MCF 10A (cell line): ENCODE measurements at regions of chr1 and their contacts with region 1.

Region 1: DNA sequence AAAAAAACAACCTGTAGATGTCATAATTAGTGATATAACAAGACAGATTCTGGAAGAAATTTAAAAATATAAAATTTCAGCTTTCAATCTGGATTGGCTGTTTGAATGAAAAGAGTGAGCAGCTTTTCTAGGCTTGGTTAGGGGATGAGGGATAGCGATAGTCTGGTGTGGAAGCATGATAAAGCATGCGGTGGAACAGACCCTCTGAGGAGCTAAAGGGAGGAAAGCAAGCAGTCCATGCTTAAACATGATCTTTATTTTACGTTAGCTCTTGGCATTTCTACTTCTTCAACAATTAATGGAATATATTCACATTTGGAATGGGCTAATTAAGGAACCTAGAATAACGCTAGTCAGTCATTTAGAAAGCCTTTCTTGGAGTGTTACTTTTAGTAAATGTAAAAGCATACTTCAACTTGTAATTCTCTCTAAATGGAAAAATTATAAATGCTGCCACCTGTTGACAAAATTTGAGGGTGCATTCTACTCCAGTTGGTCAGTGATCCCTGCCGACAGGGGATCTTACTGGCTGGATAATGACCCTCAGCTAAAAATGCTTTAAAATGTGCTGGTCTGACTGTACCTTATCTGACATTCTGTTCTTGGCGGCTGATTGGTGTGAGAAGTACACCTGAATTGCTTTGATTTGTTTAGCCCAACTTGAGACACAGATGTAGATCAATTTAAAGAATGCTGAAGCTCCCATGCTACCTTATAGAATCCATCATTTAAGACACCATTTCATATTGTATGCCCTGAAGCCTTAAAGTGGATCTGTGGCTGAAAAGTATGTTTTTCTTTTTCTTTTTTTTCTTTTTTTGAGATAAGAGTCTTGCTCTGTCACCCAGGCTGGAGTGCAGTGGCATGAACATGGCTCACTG is 61.2 kb downstream of the AK4 start:
- DNase-seq: peak; percentile 61
- H3K4me3 Mint-ChIP-seq: no peak overlapping the region
- H3K27ac Mint-ChIP-seq: no peak overlapping the region
- H3K4me1 Mint-ChIP-seq: no peaks in the 10 kb centered on the region
- H3K27me3 Mint-ChIP-seq: no peaks in the 10 kb centered on the region
- CTCF ChIP-seq: peak; percentile 56

Region 2: GRCh38 chr1:64864018-64864940 is 345.0 kb before region 1 on chr1:
- CTCF ChIA-PET with region 1: no interaction called
- POLR2A ChIA-PET with region 1: no interaction called
- intact Hi-C with region 1: loop called (anchors 10 kb)
- DNase-seq: peak; percentile 55
- H3K4me3 Mint-ChIP-seq: no peak overlapping the region
- H3K27ac Mint-ChIP-seq: no peak overlapping the region
- H3K4me1 Mint-ChIP-seq: no peaks in the 10 kb centered on the region
- H3K27me3 Mint-ChIP-seq: no peaks in the 10 kb centered on the region
- CTCF ChIP-seq: no peak

Region 3: DNA sequence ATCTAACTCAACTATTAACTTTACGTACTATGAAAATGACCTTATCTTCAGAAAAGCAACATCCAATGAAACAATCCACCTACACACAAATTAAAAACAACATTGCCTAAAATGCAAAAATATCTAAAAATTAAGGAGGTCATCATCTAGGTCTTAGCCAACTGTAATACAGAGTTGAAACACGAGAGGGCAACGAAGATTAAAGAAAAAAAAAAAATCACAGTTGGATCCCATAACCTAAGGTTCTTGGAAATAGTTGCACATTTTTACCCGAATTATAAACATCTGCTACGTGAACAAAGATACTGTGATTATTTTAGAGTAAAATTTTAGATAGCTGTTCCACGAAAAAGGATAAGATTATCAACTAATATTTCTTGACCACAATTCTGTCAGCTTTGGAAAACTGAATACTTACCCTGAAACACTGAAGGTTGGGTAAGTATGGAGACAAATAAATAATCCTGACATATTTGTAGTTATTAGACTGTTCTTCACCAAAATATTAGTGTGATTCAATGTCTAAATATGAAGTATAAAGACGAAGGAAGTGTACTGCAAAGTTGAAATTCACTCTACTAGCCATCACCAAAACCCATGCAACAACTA is 149.2 kb before region 1 on chr1:
- CTCF ChIA-PET with region 1: interaction called, 101 read pairs
- POLR2A ChIA-PET with region 1: interaction called, 11 read pairs
- intact Hi-C with region 1: loop called (anchors 1 kb)
- DNase-seq: peak; percentile 54
- H3K4me3 Mint-ChIP-seq: no peak overlapping the region
- H3K27ac Mint-ChIP-seq: no peak overlapping the region
- H3K4me1 Mint-ChIP-seq: peaks cover 27% of the 10 kb centered on the region
- H3K27me3 Mint-ChIP-seq: no peaks in the 10 kb centered on the region
- CTCF ChIP-seq: peak; percentile 63

Region 4: GRCh38 chr1:65075123-65075976 is 133.9 kb before region 1 on chr1:
- CTCF ChIA-PET with region 1: interaction called, 51 read pairs
- POLR2A ChIA-PET with region 1: no interaction called
- intact Hi-C with region 1: loop called (anchors 1 kb)
- DNase-seq: peak; percentile 71
- H3K4me3 Mint-ChIP-seq: no peak overlapping the region
- H3K27ac Mint-ChIP-seq: no peak overlapping the region
- H3K4me1 Mint-ChIP-seq: peaks cover 5% of the 10 kb centered on the region
- H3K27me3 Mint-ChIP-seq: no peaks in the 10 kb centered on the region
- CTCF ChIP-seq: peak; percentile 48

Region 5: DNA sequence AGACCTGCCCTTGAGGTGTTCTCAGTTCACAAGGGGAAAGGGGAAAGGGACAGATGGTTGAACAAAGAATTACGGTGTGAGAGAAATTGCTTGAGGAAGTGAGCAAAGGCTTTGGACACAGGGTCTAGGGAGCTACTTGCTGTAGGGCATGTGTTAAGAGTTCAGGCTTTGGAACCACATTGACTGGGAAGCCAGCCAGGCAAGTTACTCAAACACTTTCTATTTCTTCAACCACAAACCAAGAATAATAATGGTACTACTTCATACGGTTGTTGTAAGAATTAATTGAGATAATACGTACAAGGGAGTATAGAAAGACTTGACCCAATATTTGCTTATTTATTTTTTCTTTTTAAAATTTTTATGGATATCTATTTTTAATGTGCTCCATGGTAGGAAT is 34.7 kb before region 1 on chr1:
- CTCF ChIA-PET with region 1: interaction called, 16 read pairs
- POLR2A ChIA-PET with region 1: interaction called, 3 read pairs
- intact Hi-C with region 1: no loop called
- DNase-seq: peak; percentile 98
- H3K4me3 Mint-ChIP-seq: peak overlapping the region; percentile 52
- H3K27ac Mint-ChIP-seq: peak overlapping the region; percentile 90
- H3K4me1 Mint-ChIP-seq: peaks cover 67% of the 10 kb centered on the region
- H3K27me3 Mint-ChIP-seq: no peaks in the 10 kb centered on the region
- CTCF ChIP-seq: no peak

Region 6: GRCh38 chr1:65189576-65190115 is 19.6 kb before region 1 on chr1:
- CTCF ChIA-PET with region 1: interaction called, 29 read pairs
- POLR2A ChIA-PET with region 1: interaction called, 4 read pairs
- intact Hi-C with region 1: no loop called
- DNase-seq: no peak
- H3K4me3 Mint-ChIP-seq: no peak overlapping the region
- H3K27ac Mint-ChIP-seq: peak overlapping the region; percentile 72
- H3K4me1 Mint-ChIP-seq: peaks cover 5% of the 10 kb centered on the region
- H3K27me3 Mint-ChIP-seq: no peaks in the 10 kb centered on the region
- CTCF ChIP-seq: no peak

Region 7: DNA sequence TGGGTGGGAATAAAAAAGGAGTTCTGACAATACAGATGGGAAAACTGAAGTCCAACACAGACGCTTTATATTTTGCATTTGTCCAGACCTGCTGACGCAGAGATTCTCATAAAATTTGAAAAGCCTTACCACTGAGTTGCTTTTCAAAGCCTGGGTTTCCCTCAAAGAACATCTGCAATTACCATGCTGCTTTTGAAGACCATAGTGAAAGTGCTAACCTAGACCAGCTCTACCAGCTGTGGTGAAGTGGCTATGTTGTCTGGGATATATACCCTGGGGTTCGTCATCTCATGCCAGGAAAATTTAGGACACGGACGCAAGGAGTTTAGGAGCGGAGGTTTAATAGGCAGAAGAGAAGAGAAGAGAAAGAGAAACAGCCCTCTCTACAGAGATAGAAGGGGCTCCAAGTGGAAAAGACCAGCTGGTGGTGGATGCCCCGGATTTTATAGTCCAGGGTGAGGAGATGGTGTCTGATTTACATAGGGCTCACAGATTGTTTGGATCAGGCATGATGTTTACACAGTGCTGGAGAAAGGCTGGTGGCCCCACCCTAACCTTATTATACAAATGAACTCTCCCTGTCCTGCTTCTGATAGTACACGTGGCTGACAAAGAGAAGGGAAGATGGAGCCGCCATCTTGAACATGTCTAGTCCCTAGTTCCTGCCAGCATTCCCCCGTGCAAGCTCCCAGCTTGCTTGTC is 12.5 kb after region 1 on chr1:
- CTCF ChIA-PET with region 1: interaction called, 26 read pairs
- POLR2A ChIA-PET with region 1: interaction called, 3 read pairs
- intact Hi-C with region 1: no loop called
- DNase-seq: no peak
- H3K4me3 Mint-ChIP-seq: no peak overlapping the region
- H3K27ac Mint-ChIP-seq: no peak overlapping the region
- H3K4me1 Mint-ChIP-seq: no peaks in the 10 kb centered on the region
- H3K27me3 Mint-ChIP-seq: no peaks in the 10 kb centered on the region
- CTCF ChIP-seq: no peak